HEK293 (cell line): ENCODE measurements at regions of chr17 and their contacts with region 1.

Region 1: GRCh38 chr17:42422958-42423712 is at the start of gene CAVIN1:
- H3K4me3 ChIP-seq: peak within 1 kb of the TSS; percentile 79
- H3K27ac ChIP-seq: peak within 1 kb of the TSS; percentile 38; the same call in 1 of the 2 replicates
- H3K4me1 ChIP-seq: peaks cover 2% of the 10 kb centered on the region
- CTCF ChIP-seq: no peak

Region 2: GRCh38 chr17:42019509-42020404 is 403.4 kb before region 1 on chr17 and contains the start of gene NKIRAS2:
- CTCF ChIA-PET with region 1: no interaction called
- POLR2A ChIA-PET with region 1: interaction called, 14 read pairs
- H3K4me3 ChIP-seq: peak within 1 kb of the TSS; percentile 93
- H3K27ac ChIP-seq: peak within 1 kb of the TSS; percentile 69; the same call in 1 of the 2 replicates
- H3K4me1 ChIP-seq: peaks cover 3% of the 10 kb centered on the region; the same call in 1 of the 2 replicates
- CTCF ChIP-seq: peak; percentile 94

Region 3: DNA sequence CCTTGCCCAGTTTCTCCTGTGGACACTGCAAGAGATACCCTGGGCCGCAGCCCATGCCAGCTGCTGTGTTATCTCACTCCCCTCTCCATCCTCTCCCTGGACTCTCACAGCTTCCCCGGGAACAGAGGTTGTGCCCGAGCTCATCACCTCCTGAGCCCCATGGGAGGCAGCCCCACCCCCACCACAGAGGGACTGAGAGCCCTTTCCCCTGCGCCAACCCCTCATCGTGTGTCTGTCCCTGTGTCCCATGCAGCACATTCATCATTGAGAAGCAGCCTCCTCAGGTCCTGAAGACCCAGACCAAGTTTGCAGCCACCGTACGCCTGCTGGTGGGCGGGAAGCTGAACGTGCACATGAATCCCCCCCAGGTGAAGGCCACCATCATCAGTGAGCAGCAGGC is 122.1 kb before region 1 on chr17:
- CTCF ChIA-PET with region 1: no interaction called
- POLR2A ChIA-PET with region 1: no interaction called
- H3K4me3 ChIP-seq: no peak overlapping the region
- H3K27ac ChIP-seq: no peak overlapping the region
- H3K4me1 ChIP-seq: no peaks in the 10 kb centered on the region
- CTCF ChIP-seq: no peak

Region 4: GRCh38 chr17:42405963-42406495 is 17.1 kb before region 1 on chr17:
- CTCF ChIA-PET with region 1: interaction called, 33 read pairs
- POLR2A ChIA-PET with region 1: interaction called, 53 read pairs
- H3K4me3 ChIP-seq: no peak overlapping the region
- H3K27ac ChIP-seq: no peak overlapping the region
- H3K4me1 ChIP-seq: 0 out of 2 replicates have a peak, but pooled peaks cover 3% of the 10 kb centered on the region
- CTCF ChIP-seq: peak; percentile 88

Region 5: GRCh38 chr17:42459256-42459800 is 36.2 kb after region 1 on chr17:
- CTCF ChIA-PET with region 1: interaction called, 4 read pairs
- POLR2A ChIA-PET with region 1: interaction called, 25 read pairs
- H3K4me3 ChIP-seq: peak overlapping the region; percentile 80
- H3K27ac ChIP-seq: peak overlapping the region; percentile 73
- H3K4me1 ChIP-seq: peaks cover 5% of the 10 kb centered on the region
- CTCF ChIP-seq: peak; percentile 64

Region 6: DNA sequence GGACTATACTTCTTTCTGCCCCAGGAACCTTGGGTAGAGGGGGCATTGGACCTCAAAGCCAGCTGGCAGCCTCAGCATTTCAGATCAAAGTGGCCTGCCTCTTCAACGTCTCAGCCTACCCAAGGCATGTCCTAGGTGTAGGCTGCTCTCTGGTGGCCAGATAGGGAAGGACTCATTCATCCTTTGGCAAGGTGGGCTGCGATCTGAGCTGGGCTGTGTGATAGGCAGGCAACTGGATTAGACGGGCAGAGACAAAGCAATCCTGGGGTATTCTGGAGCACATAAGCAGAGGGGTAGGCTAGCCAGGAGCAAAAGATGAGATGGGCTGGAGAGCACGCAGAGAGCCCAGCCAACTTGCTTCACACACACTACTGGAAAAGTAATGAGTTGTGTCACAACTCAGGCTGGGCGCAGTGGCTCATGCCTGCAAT is 104.2 kb after region 1 on chr17:
- CTCF ChIA-PET with region 1: interaction called, 16 read pairs
- POLR2A ChIA-PET with region 1: interaction called, 10 read pairs
- H3K4me3 ChIP-seq: no peak overlapping the region
- H3K27ac ChIP-seq: no peak overlapping the region
- H3K4me1 ChIP-seq: peaks cover 15% of the 10 kb centered on the region
- CTCF ChIP-seq: peak; percentile 87